ENCODE measurements at regions of chr22 and their contacts with region 1.

Region 1: DNA sequence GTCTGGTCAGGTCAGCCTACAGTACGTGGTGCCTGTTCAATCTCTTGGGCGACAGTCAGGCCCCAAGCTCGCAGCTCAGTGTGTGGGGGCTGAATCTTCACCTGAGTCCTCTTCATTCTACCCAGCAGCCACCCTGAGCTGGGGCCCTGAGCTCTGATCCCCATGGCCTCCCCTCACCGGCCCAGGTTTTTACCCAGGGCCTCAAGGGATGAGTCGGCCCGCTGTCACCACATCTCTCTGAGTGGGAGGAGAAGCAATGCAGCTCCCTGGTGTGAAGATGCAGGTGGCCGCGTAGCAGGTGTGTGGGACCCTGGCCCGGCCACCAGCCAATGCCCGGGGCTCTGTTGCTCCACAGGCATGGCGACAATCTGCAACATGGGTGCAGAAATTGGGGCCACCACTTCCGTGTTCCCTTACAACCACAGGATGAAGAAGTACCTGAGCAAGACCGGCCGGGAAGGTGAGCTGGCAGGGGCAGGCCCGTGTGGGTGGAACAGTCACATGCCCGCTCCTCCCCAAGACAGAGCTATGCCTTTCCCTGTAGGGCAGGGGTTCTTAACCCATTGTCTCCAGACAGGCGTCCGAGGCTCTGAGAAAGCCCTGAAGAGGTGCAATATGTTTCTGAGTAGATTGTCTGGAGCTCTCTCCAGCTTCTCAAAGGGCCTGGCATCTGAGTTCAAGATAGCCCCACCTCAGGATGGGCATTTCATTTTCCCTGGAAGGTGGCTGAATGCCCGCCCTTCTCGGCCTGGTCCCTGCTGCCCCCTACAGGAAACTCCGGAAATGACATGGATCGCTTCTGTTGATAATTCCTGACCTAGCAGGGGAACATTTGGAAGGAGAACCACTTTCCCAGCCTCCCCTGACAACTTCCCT is 26.9 kb downstream of the POLR3H start:
- DNase-seq: peak; percentile 68
- CTCF ChIP-seq: peak; percentile 73

Region 2: DNA sequence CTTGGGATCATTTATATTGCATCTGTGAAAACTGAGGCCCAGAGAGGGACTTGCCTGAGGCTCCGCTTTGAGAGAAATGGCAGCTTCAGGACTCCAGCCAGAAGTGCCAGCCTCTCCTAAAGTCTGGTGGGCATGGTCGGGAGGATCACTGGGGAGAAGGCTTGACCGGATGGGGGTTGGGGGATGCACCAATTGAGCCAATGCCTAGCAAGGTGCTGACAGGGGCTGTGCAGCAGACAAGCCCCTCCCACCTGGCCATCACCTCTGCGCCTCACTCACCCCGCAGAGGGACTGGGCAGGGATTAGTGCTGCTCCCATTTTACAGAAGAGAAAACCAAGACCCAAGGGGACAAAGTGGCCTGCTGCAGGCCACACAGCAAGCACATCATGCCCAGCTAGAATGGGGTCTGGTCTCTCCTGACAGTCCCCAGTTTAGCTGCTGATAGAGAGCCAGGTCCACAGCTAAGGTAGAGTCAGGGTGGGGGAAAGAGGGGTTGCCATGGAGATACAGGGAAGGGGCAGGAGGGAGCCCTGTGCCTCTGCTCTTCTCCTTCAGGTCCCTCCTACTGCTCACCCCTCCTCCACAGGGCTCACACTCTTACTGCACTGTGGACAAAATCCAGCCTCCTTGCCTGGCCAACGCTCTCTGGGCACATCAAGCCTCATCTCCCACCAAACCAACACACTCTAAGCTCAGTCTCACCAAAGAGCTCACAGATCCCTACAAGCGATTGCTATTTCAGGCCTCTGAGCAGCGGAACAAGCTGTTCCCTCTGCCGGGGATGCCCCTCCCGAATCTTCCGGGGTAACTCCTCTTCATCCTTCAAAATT is 106.2 kb before region 1 on chr22:
- CTCF ChIA-PET with region 1: interaction called, 109 read pairs
- POLR2A ChIA-PET with region 1: no interaction called
- DNase-seq: no peak
- CTCF ChIP-seq: no peak

Region 3: GRCh38 chr22:41468381-41469217 is 48.8 kb before region 1 on chr22 and contains the starts of genes ACO2 and PHF5A:
- CTCF ChIA-PET with region 1: interaction called, 10 read pairs
- POLR2A ChIA-PET with region 1: no interaction called
- DNase-seq: peak; percentile 96
- CTCF ChIP-seq: no peak

Region 4: GRCh38 chr22:41501209-41501608 is 16.2 kb before region 1 on chr22:
- CTCF ChIA-PET with region 1: interaction called, 55 read pairs
- POLR2A ChIA-PET with region 1: no interaction called
- DNase-seq: peak; percentile 65
- CTCF ChIP-seq: no peak

Region 5: DNA sequence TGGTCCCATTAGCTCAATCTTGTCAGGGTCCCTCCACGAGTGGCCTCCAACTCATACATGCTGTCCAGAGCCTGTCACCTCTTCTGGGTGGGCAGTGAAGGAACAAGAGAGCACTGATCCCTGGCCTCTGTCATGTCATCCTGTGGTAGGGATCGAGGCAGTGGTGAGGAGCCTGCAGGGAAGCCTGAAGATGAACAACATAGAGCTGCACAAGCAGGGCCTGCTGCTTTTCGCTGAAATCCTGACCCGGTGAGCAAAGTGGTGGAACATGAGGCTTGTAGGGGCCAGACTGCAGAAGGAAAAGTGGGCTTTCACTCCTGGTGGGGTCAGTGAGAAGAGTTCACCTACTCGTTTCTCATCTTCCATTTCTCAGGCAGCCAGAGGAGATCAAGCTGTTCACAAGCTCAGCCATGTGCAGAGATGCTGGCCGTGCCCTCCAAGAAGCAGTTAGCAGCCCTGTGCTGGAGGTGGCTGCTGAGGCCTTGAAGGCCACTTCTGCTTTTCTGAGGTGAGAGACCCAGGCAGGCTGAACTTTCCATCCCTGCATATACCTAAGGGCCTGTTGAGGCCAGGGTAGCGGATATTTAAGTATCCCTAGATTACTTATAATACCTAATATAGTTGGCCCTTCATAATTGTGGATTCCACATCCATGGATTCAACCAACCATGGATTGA is 214.8 kb after region 1 on chr22:
- CTCF ChIA-PET with region 1: no interaction called
- POLR2A ChIA-PET with region 1: no interaction called
- DNase-seq: peak; percentile 47
- CTCF ChIP-seq: no peak